Mucosa of descending colon (tissue), 3 donors: ENCODE measurements at regions of chr17 and their contacts with region 1.

Region 1: DNA sequence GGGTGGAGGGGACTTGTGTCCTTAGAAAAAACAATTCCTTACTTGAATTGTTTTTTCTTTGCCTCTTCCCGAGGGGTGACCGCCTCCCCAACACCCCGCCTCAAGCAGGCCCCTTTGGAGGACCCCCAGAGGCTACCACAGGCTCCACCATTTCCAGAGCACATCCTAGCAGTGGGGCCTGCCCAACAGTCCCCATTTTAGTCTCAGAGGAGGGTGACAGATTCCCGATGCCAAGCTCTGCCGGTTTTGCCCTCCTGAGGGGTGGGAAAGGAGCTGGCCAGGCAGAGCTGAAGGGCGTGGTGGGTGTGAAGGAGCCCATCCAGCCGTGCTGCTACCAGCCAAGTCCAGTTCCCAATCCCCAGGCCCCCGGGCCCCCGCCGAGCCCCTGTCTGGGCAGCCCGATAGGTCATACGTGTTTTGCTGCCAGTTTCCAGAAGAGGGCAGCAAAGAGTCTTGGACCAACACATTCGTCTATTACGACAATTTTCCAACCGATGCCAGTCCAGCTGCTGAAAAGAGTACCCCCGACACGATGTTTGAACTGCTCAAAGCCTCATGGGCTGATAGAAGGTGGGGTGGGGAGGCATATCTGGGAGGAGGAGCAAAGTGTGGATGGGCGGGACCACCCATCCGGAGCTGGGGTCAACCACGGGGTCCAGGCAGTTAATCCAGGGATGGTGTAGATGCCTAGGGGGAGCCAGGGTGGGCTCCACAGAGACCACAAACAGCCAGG is 18.8 kb upstream of the GAA start:
- DNase-seq: peak in 2 of 3 donors; percentile 45 to 75
- ATAC-seq: peak; percentile 76
- H3K4me3 ChIP-seq: no peak overlapping the region
- H3K4me1 ChIP-seq: no peaks in the 10 kb centered on the region
- CTCF ChIP-seq: peak; percentile 69

Region 2: DNA sequence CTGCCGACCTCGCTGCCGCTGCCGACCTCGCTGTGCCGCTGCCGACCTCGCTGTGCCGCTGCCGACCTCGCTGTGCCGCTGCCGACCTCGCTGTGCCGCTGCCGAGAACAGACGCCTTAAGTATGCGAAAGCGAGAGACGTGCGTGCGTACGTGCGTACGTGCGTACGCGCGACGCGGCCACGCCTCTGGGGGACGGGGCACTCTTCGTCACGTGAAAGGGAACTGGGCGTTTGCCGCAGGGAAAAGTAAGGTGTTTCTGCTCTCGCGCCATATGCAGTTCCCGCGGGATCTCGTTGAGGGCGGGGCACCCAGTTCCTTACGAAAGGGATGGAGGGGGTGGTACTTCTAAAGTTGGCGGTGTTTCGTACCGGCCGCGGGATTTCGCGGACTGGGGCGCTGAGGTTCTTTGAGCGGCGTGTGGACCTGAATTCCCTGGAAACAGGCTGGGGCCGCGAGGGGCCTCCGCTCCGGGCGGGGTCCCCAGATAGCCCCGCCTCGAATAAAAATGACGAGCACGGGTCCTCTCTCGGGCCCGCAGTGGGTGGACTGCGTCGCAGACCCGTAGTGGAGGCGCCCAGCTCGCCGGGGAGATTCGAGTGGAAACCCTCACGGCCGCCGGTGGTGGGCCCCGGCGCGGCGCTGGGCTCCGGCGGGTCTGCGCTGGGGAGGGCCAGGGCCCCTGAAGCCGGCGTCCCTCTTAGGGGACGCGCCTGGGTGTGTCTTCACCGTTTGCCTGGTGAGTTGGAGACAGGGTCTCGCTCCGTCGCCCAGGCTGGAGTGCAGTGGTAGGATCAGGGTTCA is 64.7 kb after region 1 on chr17 and contains the start of gene EIF4A3:
- intact Hi-C with region 1: loop called in 1 of 2 experiments (anchors 10 kb)
- DNase-seq: peak; percentile 99
- ATAC-seq: peak; percentile 97
- H3K4me3 ChIP-seq: peak within 1 kb of the TSS; percentile 90
- H3K4me1 ChIP-seq: peaks cover 19% of the 10 kb centered on the region
- CTCF ChIP-seq: no peak
- total RNA-seq, gene EIF4A3: 59.2 to 80.2 (median 61.8) TPM